PC-9 (cell line): ENCODE measurements at regions of chr20 and their contacts with region 1.

Region 1: DNA sequence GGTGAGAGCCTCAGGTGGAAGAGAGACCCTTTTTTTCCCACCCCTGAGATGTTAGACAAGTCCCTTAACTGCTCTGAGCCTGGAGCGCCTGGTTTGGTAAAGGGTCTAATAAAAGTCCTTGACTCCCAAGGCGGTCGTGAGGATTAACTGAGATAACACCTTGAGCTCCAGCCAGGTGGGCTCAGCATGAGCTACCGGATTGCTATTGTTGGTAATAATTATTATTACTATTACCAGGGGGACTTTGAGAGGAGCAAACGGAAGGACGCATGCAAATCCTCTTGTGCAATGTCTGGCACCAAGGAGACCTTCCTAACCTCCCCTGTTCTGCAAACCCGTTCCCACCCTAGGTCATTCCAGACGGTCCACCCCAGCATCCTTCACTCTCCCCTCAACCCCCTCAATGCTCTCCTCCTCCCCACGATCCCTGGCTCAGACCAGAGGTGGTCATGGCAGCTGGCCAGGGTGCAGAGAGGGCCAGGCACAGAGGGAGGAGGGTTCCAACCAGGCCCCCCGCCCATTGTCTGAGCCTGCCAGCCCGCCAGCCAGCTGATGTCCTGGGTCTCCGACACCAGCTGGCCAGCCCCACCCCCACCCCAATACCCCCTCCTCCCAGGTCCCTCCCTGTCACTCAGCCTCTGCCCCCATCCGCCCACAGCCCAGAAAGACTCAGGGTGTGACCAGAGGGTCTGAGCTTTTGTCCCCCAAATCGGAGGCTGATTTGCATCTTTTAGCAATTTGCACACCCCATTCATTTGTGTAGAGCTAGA is 14.3 kb upstream of the CBFA2T2 start:
- DNase-seq: no peak
- H3K4me3 ChIP-seq: no peak overlapping the region
- H3K27ac ChIP-seq: no peak overlapping the region
- H3K4me1 ChIP-seq: peaks cover 12% of the 10 kb centered on the region
- H3K27me3 ChIP-seq: no peaks in the 10 kb centered on the region
- CTCF ChIP-seq: no peak

Region 2: DNA sequence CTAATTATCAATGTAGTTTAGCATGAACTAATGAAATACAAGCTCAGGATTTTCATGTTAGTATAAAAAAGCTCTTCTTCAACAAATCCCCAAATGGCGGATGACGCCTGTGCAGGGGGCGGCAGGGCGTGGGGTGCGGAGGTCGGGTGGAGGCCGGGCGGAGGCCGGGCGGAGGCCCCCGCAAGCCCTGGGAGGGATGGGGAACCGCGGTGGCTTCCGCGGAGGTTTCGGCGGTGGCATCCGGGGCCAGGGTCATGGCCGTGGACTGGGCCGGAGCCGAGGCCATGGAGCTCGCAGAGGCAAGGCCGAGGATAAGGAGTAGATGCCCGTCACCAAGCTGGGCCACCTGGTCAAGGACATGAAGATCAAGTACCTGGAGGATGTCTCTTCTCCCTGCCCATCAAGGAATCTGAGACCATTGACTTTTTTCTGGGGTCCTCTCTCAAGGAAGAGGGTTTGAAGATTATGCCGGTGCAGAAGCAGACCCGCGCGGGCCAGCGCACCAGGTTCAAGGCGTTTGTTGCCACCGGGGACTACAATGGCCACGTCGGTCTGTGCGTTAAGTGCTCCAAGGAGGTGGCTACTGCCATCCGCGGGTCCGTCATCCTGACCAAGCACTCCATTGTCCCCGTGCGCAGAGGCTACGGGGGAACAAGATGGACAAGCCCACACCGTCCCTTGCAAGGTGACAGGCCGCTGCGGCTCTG is 646.9 kb after region 1 on chr20:
- CTCF ChIA-PET with region 1: interaction called, 16 read pairs
- POLR2A ChIA-PET with region 1: no interaction called
- intact Hi-C with region 1: no loop called
- DNase-seq: no peak
- H3K4me3 ChIP-seq: no peak overlapping the region
- H3K27ac ChIP-seq: no peak overlapping the region
- H3K4me1 ChIP-seq: peaks cover 4% of the 10 kb centered on the region
- H3K27me3 ChIP-seq: no peaks in the 10 kb centered on the region
- CTCF ChIP-seq: no peak